ENCODE measurements at regions of chr4 and their contacts with region 1.

Region 1: DNA sequence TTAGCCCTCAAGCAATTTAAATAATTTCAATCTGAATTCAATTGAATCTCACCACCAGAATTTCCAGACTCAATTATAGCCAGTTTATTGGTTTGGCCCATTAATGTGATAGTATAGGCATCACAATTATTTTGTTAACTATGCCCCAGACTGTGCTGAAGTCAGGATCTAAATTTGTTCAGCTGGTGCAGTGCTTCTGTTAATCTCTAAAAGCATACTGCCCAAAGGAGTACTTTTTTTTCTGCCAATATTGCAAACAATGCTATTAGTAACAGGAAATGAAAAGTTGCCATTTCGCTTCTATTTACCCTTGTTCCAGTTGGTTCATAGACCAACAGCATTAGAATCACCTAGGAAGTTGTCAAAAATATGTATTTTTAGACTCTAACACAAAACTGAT is 171.0 kb downstream of the GPM6A start:
- DNase-seq: no peak
- H3K4me3 ChIP-seq: no peak overlapping the region
- H3K27ac ChIP-seq: no peak overlapping the region
- H3K4me1 ChIP-seq: no peaks in the 10 kb centered on the region
- H3K27me3 ChIP-seq: no peaks in the 10 kb centered on the region
- CTCF ChIP-seq: no peak
- POLR2A ChIP-seq: no peak

Region 2: GRCh38 chr4:175339100-175339707 is 301.8 kb before region 1 on chr4:
- intact Hi-C with region 1: no loop called
- DNase-seq: no peak
- H3K4me3 ChIP-seq: no peak overlapping the region
- H3K27ac ChIP-seq: no peak overlapping the region
- H3K4me1 ChIP-seq: no peaks in the 10 kb centered on the region
- H3K27me3 ChIP-seq: no peaks in the 10 kb centered on the region
- CTCF ChIP-seq: no peak
- POLR2A ChIP-seq: no peak

Region 3: DNA sequence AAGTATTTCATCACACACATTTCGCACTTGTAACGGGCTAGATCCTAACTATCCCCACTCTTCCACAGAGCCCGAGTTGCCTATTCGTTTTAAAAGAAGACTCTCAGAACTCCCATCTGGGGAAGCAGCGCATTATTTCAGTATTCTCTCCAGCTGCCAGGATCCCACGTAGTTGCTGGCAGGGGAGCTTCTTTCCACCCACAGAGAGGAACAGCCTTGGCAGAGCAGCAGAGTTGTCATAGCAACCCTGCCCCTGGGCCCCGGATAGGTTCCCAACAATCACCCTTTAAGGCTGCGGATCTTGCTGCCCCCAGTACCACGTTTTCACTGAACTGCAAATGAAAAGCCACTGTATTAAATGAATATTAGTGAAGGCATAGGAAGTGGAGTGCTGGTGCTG is 64.4 kb after region 1 on chr4:
- intact Hi-C with region 1: loop called (anchors 5 kb)
- DNase-seq: peak in 1 of 2 donors; percentile 65
- H3K4me3 ChIP-seq: no peak overlapping the region
- H3K27ac ChIP-seq: no peak overlapping the region
- H3K4me1 ChIP-seq: no peaks in the 10 kb centered on the region
- H3K27me3 ChIP-seq: no peaks in the 10 kb centered on the region
- CTCF ChIP-seq: no peak
- POLR2A ChIP-seq: no peak

Measured in breast epithelium (tissue), 4 donors.